ENCODE measurements at regions of chr13 and their contacts with region 1.

Region 1: DNA sequence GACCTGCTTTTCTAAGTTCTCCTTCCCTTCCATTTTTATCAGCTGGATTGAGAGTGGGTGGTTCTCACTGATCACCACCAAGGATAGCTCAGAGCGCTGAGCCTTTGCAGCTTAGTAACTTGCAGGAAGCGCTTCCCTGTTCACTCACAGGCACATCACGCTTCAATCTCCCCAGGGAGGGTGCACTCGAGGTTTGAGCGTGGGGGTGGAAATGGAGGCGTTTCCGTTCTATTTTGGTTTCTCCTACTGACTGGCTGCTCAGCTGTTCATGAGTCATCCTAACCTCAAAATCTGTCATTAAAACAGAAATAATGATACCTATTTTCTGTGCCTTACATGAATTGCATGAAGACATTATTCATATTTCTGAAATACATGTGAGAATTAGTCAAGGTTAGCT is 292.1 kb downstream of the SPRY2 start:
- DNase-seq: peak; percentile 78

Region 2: DNA sequence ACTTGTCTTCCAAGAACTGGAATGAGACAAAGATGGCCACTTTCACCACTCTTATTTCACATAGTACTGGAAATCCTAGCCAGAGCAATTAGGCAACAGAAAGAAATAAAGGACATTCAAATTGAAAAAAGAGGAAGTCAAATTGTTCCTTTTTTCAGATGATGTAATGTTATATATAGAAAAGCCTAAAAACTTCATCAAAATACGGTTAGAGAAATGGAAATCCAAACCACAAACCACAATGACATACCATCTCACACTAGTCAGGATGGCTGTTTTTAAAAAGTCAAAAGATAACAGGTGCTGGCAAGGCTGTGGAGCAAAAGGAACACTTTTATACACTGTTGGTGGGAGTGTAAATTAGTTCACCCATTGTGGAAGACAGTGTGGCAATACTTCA is 405.4 kb after region 1 on chr13:
- CTCF ChIA-PET with region 1: interaction called, 11 read pairs
- POLR2A ChIA-PET with region 1: no interaction called
- DNase-seq: no peak

Measured in HEK293T (cell line).